ENCODE measurements at regions of chr5 and their contacts with region 1.

Region 1: GRCh38 chr5:50962934-50963872 is 296.8 kb downstream of the PARP8 start:
- DNase-seq: peak; percentile 22 to 28
- ATAC-seq: peak; percentile 48 to 66
- H3K4me3 ChIP-seq: peak overlapping the region; percentile 44 to 63 (median 52)
- H3K27ac ChIP-seq: no peak overlapping the region
- H3K4me1 ChIP-seq: peaks cover 11 to 12% of the 10 kb centered on the region in 2 donors
- H3K27me3 ChIP-seq: peaks cover 50 to 64% (median 55%) of the 10 kb centered on the region in 3 donors
- CTCF ChIP-seq: peak; percentile 55 to 79 (median 71)
- POLR2A ChIP-seq: no peak

Region 2: DNA sequence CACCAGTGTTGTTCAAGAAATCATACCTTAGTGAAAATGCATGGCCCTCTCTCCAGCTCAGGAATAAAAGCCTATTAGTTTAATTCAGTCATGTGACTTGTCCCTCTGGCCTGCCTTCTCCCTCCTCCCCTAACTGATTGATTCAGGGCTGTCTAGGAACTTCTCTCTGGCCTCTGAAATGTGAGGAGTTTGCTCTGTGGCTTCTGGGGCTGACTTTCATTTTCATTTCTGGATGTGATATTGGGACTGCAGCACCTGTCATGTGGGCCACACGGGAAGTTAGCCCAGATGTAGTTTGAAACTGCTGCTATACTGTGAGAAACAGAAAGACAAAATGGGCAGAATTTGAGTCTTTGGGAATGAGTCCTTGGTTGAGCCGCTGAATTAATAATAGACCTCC is 251.9 kb before region 1 on chr5:
- in situ Hi-C with region 1: no loop called
- intact Hi-C with region 1: no loop called
- DNase-seq: peak in 1 of 2 donors; percentile 12
- ATAC-seq: peak in 1 of 2 donors; percentile 55
- H3K4me3 ChIP-seq: peak overlapping the region in 2 of 4 donors; percentile 6 to 37
- H3K27ac ChIP-seq: no peak overlapping the region
- H3K4me1 ChIP-seq: no peaks in the 10 kb centered on the region
- H3K27me3 ChIP-seq: no peaks in the 10 kb centered on the region
- CTCF ChIP-seq: no peak
- POLR2A ChIP-seq: no peak

Region 3: DNA sequence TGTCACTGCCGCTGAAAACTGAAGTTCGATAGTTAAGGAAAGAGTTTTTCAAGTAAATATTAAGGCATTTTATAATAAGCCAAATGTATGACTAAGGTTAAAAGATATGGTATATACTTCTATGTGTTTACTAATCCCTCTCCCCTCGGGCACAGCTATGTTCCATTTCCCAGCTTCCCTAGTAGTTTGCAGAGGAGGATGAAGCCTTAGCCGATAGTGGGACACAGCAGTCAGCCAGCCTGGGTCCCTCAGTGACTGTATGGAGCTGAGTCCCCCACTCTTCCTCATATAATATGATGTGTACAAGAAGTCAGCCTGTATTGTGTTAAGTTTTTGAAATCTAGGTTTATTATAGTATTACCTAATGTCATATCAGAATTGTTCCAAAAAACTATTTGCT is 241.0 kb before region 1 on chr5:
- in situ Hi-C with region 1: no loop called
- intact Hi-C with region 1: no loop called
- DNase-seq: no peak
- ATAC-seq: no peak
- H3K4me3 ChIP-seq: no peak overlapping the region
- H3K27ac ChIP-seq: no peak overlapping the region
- H3K4me1 ChIP-seq: no peaks in the 10 kb centered on the region
- H3K27me3 ChIP-seq: no peaks in the 10 kb centered on the region
- CTCF ChIP-seq: no peak
- POLR2A ChIP-seq: no peak

Region 4: DNA sequence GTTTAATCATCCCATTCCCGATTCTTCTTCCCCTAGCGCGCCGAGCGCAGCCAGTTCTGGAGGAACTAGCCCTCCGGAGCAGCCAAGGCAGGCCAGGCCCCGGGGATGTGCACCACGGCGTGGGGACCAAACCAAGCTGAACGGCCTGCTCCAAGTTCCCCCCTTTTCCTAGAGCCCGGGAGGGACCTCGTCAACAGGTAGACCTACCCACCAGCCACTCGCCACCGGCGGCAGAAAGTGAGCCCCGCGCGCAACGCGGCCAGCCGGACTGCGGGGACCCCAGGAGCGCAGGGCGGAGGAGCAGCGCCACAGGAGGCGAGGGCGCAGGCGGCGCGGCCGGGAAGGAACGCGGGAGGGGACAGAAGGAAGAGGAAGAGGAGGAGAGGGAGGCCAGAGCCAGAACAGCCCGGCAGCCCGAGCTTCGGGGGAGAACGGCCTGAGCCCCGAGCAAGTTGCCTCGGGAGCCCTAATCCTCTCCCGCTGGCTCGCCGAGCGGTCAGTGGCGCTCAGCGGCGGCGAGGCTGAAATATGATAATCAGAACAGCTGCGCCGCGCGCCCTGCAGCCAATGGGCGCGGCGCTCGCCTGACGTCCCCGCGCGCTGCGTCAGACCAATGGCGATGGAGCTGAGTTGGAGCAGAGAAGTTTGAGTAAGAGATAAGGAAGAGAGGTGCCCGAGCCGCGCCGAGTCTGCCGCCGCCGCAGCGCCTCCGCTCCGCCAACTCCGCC is 419.7 kb after region 1 on chr5 and contains the start of gene ISL1:
- in situ Hi-C with region 1: no loop called
- intact Hi-C with region 1: no loop called
- DNase-seq: peak; percentile 13 to 19
- ATAC-seq: no peak
- H3K4me3 ChIP-seq: peak within 1 kb of the TSS; percentile 38 to 43 (median 40)
- H3K27ac ChIP-seq: no peak within 1 kb of the TSS
- H3K4me1 ChIP-seq: peaks cover 5 to 8% of the 10 kb centered on the region in 2 donors
- H3K27me3 ChIP-seq: peaks cover 93 to 99% (median 94%) of the 10 kb centered on the region in 3 donors
- CTCF ChIP-seq: no peak
- POLR2A ChIP-seq: no peak
- total RNA-seq, gene ISL1: not detected

Region 5: DNA sequence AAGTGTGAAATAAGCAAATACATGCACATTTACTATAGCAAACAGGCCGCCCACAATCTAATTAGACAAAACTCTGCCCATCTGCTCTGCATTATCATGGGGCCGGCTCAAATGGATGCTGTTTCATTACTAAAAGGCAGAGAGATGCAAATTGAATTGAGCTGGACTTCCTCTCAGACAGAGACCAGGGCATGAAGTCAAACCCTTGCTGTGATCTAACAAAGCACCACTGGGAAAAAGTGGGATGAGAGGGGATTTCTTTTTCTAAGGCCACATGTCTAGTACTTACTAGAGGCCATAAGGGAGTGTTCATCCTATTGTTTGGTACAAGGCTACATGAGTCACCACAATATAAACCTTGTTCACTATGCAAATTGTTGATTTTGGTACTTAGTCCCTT is 1034.7 kb after region 1 on chr5:
- in situ Hi-C with region 1: loop called in 1 of 4 experiments (anchors 25 kb)
- intact Hi-C with region 1: no loop called
- DNase-seq: no peak
- ATAC-seq: no peak
- H3K4me3 ChIP-seq: no peak overlapping the region
- H3K27ac ChIP-seq: no peak overlapping the region
- H3K4me1 ChIP-seq: no peaks in the 10 kb centered on the region
- H3K27me3 ChIP-seq: no peaks in the 10 kb centered on the region
- CTCF ChIP-seq: no peak
- POLR2A ChIP-seq: no peak

Region 6: GRCh38 chr5:52657247-52657645 is 1694.0 kb after region 1 on chr5:
- in situ Hi-C with region 1: loop called in 2 of 4 experiments (anchors 10 to 25 kb)
- intact Hi-C with region 1: no loop called
- DNase-seq: no peak
- ATAC-seq: no peak
- H3K4me3 ChIP-seq: no peak overlapping the region
- H3K27ac ChIP-seq: no peak overlapping the region
- H3K4me1 ChIP-seq: no peaks in the 10 kb centered on the region
- H3K27me3 ChIP-seq: no peaks in the 10 kb centered on the region
- CTCF ChIP-seq: peak in 4 of 5 experiments; percentile 32 to 62 (median 42)
- POLR2A ChIP-seq: no peak

Region 7: DNA sequence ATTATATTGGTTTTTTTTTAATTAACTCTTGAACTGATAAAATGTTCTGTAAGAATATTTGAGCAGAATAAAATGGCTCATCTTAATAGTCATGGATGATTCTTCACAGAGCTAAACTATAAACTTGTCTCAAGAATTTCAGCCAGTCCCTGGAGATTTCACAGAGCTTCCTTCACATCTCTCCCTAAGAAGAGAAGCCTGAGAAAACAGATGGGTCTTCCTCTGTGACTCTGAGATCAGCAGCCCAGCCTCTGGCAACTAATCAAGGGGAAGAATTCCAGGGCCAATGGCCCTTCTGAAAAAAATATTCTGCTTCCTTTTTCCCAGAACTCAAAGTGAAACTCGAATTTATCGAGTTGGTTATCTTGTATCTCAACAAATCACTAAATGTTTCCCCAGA is 1702.4 kb after region 1 on chr5:
- in situ Hi-C with region 1: loop called in 2 of 4 experiments (anchors 10 to 25 kb)
- intact Hi-C with region 1: no loop called
- DNase-seq: no peak
- ATAC-seq: no peak
- H3K4me3 ChIP-seq: peak overlapping the region in 1 of 4 donors; percentile 9
- H3K27ac ChIP-seq: peak overlapping the region; percentile 11 to 55 (median 33)
- H3K4me1 ChIP-seq: no peaks in the 10 kb centered on the region
- H3K27me3 ChIP-seq: no peaks in the 10 kb centered on the region
- CTCF ChIP-seq: no peak
- POLR2A ChIP-seq: no peak